ENCODE measurements at regions of chr19 and their contacts with region 1.

Region 1: GRCh38 chr19:13162518-13163314 is 12.5 kb downstream of the IER2 start:
- DNase-seq: peak; percentile 70
- ATAC-seq: peak; percentile 36
- H3K4me3 Mint-ChIP-seq: peak overlapping the region; percentile 84
- H3K27ac Mint-ChIP-seq: peak overlapping the region; percentile 89
- H3K4me1 Mint-ChIP-seq: peaks cover 87% of the 10 kb centered on the region
- H3K27me3 Mint-ChIP-seq: no peaks in the 10 kb centered on the region
- CTCF ChIP-seq: no peak

Region 2: DNA sequence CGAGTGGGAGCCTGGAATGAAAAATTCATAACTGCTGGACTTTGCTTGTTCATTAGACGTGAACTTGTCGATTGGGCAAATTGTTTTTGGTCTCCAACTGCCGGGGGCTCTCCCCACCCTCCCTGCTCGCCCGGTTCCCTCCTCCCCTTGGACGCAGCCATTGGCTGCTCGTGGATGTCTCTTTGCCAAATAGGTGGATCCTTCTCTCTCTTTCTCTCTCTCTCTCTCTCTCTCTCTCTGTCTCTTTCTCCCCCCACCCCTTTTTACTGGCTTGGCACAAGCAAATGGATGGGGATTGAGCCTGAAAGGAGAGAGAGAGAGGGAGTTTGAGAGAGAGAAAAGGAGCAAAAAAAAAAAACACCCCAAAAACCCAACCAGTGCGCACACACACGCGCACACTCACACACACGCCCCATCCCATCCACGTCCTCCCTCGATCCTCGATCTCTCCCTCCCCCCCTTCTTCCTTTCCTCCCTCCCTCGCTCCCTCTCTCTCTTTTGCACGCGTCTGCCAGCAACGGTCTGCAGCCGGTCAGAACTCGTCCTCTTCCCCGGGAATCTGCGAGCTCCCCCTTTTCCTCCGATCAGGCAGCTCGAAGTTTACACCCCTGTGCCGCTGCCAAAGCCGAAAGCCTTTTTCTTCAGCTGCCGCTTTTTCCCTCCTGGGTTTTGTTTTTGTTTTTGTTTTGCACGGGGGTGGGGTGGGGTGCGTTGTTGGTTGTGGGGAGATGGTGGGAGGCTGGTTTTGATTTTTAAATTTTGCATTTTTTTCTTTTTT is 139.7 kb before region 1 on chr19:
- CTCF ChIA-PET with region 1: no interaction called
- POLR2A ChIA-PET with region 1: no interaction called
- intact Hi-C with region 1: no loop called
- DNase-seq: no peak
- ATAC-seq: peak; percentile 34
- H3K4me3 Mint-ChIP-seq: peak overlapping the region; percentile 80
- H3K27ac Mint-ChIP-seq: no peak overlapping the region
- H3K4me1 Mint-ChIP-seq: peaks cover 30% of the 10 kb centered on the region
- H3K27me3 Mint-ChIP-seq: peaks cover 29% of the 10 kb centered on the region
- CTCF ChIP-seq: no peak

Region 3: GRCh38 chr19:13044231-13044836 is 118.4 kb before region 1 on chr19:
- CTCF ChIA-PET with region 1: no interaction called
- POLR2A ChIA-PET with region 1: no interaction called
- intact Hi-C with region 1: no loop called
- DNase-seq: no peak
- ATAC-seq: no peak
- H3K4me3 Mint-ChIP-seq: no peak overlapping the region
- H3K27ac Mint-ChIP-seq: no peak overlapping the region
- H3K4me1 Mint-ChIP-seq: no peaks in the 10 kb centered on the region
- H3K27me3 Mint-ChIP-seq: peaks cover 12% of the 10 kb centered on the region
- CTCF ChIP-seq: no peak

Region 4: GRCh38 chr19:13117772-13118423 is 44.8 kb before region 1 on chr19 and contains the start of gene NACC1:
- CTCF ChIA-PET with region 1: no interaction called
- POLR2A ChIA-PET with region 1: interaction called, 13 read pairs
- intact Hi-C with region 1: no loop called
- DNase-seq: peak; percentile 94
- ATAC-seq: peak; percentile 81
- H3K4me3 Mint-ChIP-seq: peak within 1 kb of the TSS; percentile 99
- H3K27ac Mint-ChIP-seq: peak within 1 kb of the TSS; percentile 96
- H3K4me1 Mint-ChIP-seq: peaks cover 64% of the 10 kb centered on the region
- H3K27me3 Mint-ChIP-seq: no peaks in the 10 kb centered on the region
- CTCF ChIP-seq: no peak
- total RNA-seq, gene NACC1: 62.1 and 68.8 TPM in 2 replicates

Region 5: GRCh38 chr19:13181747-13182388 is 19.2 kb after region 1 on chr19:
- CTCF ChIA-PET with region 1: interaction called, 4 read pairs
- POLR2A ChIA-PET with region 1: interaction called, 49 read pairs
- intact Hi-C with region 1: no loop called
- DNase-seq: no peak
- ATAC-seq: peak; percentile 66
- H3K4me3 Mint-ChIP-seq: peak overlapping the region; percentile 49
- H3K27ac Mint-ChIP-seq: peak overlapping the region; percentile 46
- H3K4me1 Mint-ChIP-seq: peaks cover 33% of the 10 kb centered on the region
- H3K27me3 Mint-ChIP-seq: no peaks in the 10 kb centered on the region
- CTCF ChIP-seq: no peak

Region 6: GRCh38 chr19:13212759-13213330 is 50.1 kb after region 1 on chr19:
- CTCF ChIA-PET with region 1: no interaction called
- POLR2A ChIA-PET with region 1: interaction called, 12 read pairs
- intact Hi-C with region 1: loop called (anchors 1 kb)
- DNase-seq: peak; percentile 60
- ATAC-seq: no peak
- H3K4me3 Mint-ChIP-seq: no peak overlapping the region
- H3K27ac Mint-ChIP-seq: no peak overlapping the region
- H3K4me1 Mint-ChIP-seq: peaks cover 66% of the 10 kb centered on the region
- H3K27me3 Mint-ChIP-seq: no peaks in the 10 kb centered on the region
- CTCF ChIP-seq: no peak

Measured in activated B cell treated with CpG ODN at 0.5 μM for 24 hours (primary cell).